Caco-2 (cell line): ENCODE measurements at regions of chr6 and their contacts with region 1.

Region 1: DNA sequence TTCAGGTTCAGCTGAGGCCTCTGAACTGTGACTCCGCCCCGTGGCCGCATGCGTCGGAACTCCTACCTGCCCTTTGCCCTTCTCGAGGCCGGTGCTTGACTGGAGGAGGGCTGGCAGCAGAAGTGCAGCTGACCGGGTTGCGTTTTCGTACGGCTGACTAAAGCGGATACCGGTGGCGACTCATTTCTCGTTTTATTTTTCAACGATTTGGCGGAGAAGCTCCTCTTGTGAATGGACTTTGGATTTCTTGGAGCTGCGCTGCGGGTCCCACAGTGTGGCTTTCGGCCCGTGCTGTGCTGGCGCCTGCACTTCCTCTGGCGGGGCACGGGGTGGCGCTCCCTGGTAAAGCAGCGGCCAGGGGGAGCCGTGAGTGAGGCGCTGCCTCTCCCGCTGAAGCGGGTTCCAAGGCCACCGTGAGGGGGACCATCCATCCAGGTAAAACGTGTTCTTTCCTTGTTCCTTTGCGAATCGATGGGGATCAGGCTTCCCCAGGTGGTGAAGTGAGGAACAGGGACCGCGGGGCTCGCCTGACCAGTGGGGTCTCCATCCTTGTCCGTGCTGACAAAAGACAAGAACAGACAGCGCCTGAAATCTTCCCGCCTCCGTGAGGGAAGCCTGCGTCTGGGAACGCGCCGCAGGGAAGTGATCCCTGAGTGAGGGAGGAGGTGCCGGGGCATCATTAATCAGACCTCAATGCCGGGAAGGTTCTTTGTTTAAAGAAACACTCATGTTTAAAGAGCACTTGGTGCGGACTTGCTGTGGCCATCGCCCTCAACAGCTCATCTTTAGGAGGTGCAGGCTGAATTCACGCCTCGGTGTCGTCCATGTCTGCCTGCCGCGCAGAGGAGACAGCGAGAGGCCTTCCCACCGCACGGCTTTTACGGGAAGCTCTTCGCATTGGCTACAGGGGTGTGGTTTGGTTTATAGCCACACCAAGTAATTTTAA is 38.8 kb downstream of the ERMARD start:
- DNase-seq: peak; percentile 85 to 88
- H3K4me3 ChIP-seq: peak overlapping the region; percentile 53
- H3K4me3 Mint-ChIP-seq: peak overlapping the region; percentile 87
- H3K27ac Mint-ChIP-seq: peak overlapping the region; percentile 82
- H3K4me1 ChIP-seq: peaks cover 24% of the 10 kb centered on the region
- H3K4me1 Mint-ChIP-seq: peaks cover 49% of the 10 kb centered on the region
- H3K27me3 ChIP-seq: no peaks in the 10 kb centered on the region
- H3K27me3 Mint-ChIP-seq: no peaks in the 10 kb centered on the region
- CTCF ChIP-seq: peak; percentile 96 to 97

Region 2: GRCh38 chr6:169810066-169810989 is 20.1 kb after region 1 on chr6:
- CTCF ChIA-PET with region 1: interaction called, 32 read pairs
- POLR2A ChIA-PET with region 1: interaction called, 5 read pairs
- intact Hi-C with region 1: loop called (anchors 1 kb)
- DNase-seq: peak; percentile 94 to 95
- H3K4me3 ChIP-seq: 0 out of 2 replicates have a peak overlapping the region, but pooled peaks have one; percentile 4
- H3K4me3 Mint-ChIP-seq: peak overlapping the region; percentile 66
- H3K27ac Mint-ChIP-seq: peak overlapping the region; percentile 92
- H3K4me1 ChIP-seq: peaks cover 47% of the 10 kb centered on the region
- H3K4me1 Mint-ChIP-seq: peaks cover 56% of the 10 kb centered on the region
- H3K27me3 ChIP-seq: no peaks in the 10 kb centered on the region
- H3K27me3 Mint-ChIP-seq: no peaks in the 10 kb centered on the region
- CTCF ChIP-seq: no peak

Region 3: GRCh38 chr6:169883316-169883715 is 93.1 kb after region 1 on chr6:
- CTCF ChIA-PET with region 1: no interaction called
- POLR2A ChIA-PET with region 1: no interaction called
- intact Hi-C with region 1: loop called (anchors 5 kb)
- DNase-seq: no peak
- H3K4me3 ChIP-seq: no peak overlapping the region
- H3K4me3 Mint-ChIP-seq: no peak overlapping the region
- H3K27ac Mint-ChIP-seq: no peak overlapping the region
- H3K4me1 ChIP-seq: no peaks in the 10 kb centered on the region
- H3K4me1 Mint-ChIP-seq: no peaks in the 10 kb centered on the region
- H3K27me3 ChIP-seq: no peaks in the 10 kb centered on the region
- H3K27me3 Mint-ChIP-seq: no peaks in the 10 kb centered on the region
- CTCF ChIP-seq: no peak

Region 4: DNA sequence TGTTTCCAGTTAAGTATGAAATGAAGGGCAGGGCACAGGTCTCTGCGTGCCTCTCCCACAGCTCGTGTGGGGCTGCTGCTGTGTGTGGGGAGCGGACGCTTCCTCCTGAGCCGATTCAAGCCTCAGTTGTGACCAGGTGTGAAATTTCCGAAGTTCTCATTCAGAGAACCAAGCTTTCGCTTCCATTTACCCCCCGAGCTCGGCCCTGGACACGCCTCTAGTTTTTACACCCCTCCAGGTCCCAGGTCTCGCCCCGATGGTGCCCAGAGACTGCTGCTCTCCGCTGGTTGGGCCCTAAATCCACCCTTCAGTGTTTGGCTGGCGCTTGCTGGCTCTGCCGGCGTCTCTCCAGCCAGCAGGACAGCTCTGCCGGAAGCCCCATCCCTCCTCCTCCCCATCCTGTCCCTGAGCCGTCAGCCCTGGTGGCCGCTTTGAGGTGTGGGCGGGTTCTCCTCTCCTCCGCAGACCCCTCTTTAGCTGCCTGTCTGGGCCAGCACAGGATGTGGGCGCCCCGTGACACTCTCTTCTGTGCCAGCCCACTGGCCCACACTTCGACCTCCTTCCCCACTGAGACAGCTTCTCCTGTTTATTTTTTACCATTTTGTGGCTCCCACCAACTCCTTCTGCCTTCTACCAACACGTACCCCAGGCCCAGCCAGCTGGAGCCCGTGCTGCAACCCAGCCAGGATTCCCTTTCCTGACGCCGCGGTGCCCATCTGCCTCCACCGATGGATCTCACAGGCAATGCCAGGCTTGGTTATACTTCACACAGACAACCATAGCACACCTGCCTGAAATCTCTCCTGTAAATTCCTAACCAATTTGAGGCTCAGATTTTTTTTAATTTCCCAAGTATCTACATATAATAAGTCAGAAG is 357.8 kb after region 1 on chr6:
- CTCF ChIA-PET with region 1: no interaction called
- POLR2A ChIA-PET with region 1: no interaction called
- intact Hi-C with region 1: no loop called
- DNase-seq: no peak
- H3K4me3 ChIP-seq: no peak overlapping the region
- H3K4me3 Mint-ChIP-seq: no peak overlapping the region
- H3K27ac Mint-ChIP-seq: peak overlapping the region; percentile 3
- H3K4me1 ChIP-seq: peaks cover under 1% of the 10 kb centered on the region; the same call in 1 of the 2 replicates
- H3K4me1 Mint-ChIP-seq: no peaks in the 10 kb centered on the region
- H3K27me3 ChIP-seq: no peaks in the 10 kb centered on the region
- H3K27me3 Mint-ChIP-seq: no peaks in the 10 kb centered on the region
- CTCF ChIP-seq: no peak

Region 5: DNA sequence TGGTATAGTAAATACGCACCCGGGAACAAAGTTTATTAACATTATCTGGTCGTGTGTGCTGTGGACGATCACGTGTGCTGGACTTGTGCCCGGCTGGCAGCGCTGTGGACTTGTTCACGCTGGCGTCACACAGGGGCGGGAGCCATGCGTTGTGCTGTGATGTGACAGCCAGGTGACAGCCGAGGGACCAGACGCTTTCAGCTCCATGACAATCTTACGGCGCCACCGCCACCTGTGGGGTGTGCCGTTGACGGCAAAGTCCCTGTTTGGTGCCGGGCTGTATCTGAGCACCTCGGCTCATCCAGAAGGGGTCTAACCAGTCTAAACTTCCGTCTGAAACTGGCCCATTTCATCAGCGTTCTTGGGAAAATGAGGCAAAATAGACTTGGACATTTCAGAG is 475.4 kb after region 1 on chr6:
- CTCF ChIA-PET with region 1: interaction called, 3 read pairs
- POLR2A ChIA-PET with region 1: no interaction called
- intact Hi-C with region 1: loop called (anchors 10 kb)
- DNase-seq: peak; percentile 62
- H3K4me3 ChIP-seq: peak overlapping the region; percentile 9; the same call in 1 of the 2 replicates
- H3K4me3 Mint-ChIP-seq: peak overlapping the region; percentile 64
- H3K27ac Mint-ChIP-seq: peak overlapping the region; percentile 73
- H3K4me1 ChIP-seq: peaks cover 31% of the 10 kb centered on the region
- H3K4me1 Mint-ChIP-seq: peaks cover 32% of the 10 kb centered on the region
- H3K27me3 ChIP-seq: no peaks in the 10 kb centered on the region
- H3K27me3 Mint-ChIP-seq: no peaks in the 10 kb centered on the region
- CTCF ChIP-seq: peak in 1 of 2 experiments; percentile 15

Region 6: GRCh38 chr6:170516783-170517616 is 726.7 kb after region 1 on chr6:
- CTCF ChIA-PET with region 1: interaction called, 11 read pairs
- POLR2A ChIA-PET with region 1: no interaction called
- intact Hi-C with region 1: loop called (anchors 1 kb)
- DNase-seq: peak; percentile 65 to 72
- H3K4me3 ChIP-seq: no peak overlapping the region
- H3K4me3 Mint-ChIP-seq: no peak overlapping the region
- H3K27ac Mint-ChIP-seq: no peak overlapping the region
- H3K4me1 ChIP-seq: no peaks in the 10 kb centered on the region
- H3K4me1 Mint-ChIP-seq: no peaks in the 10 kb centered on the region
- H3K27me3 ChIP-seq: no peaks in the 10 kb centered on the region
- H3K27me3 Mint-ChIP-seq: no peaks in the 10 kb centered on the region
- CTCF ChIP-seq: peak; percentile 67 to 86